HCT116 (cell line): ENCODE measurements at regions of chr15 and their contacts with region 1.

Region 1: DNA sequence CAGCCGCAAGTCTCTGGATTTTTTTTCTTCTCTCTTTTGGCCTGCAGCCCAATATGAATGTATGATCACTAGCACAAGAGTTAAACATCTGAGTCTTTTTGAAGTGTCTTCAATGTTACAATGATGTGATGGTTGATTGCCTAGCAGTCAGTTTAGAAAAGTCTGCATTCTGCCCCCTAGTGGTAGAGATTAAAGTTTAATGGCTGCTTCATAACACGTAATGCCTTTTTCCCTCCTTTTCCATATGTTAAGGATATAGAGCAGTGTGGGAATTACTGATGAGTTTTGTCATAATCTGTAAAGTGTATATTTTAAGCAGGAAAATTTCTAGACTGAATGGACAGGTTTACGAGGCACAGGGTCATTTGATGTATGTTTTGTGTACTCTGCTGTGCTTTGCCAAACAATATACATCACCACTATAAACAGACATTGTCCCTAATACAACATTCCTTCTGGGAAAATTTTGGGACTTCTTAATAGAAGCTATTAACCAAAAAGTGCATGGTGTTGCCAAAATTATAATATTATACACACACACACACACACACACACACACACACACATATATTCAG is 1038.5 kb upstream of the NR2F2 start:
- DNase-seq: peak; percentile 48
- ATAC-seq: peak; percentile 85
- H3K4me3 ChIP-seq: no peak overlapping the region
- H3K27ac ChIP-seq: no peak overlapping the region
- H3K4me1 ChIP-seq: no peaks in the 10 kb centered on the region
- H3K27me3 ChIP-seq: no peaks in the 10 kb centered on the region
- CTCF ChIP-seq: peak; percentile 37 to 85 (median 47); a peak in 4 of 6 replicates
- POLR2A ChIP-seq: no peak
- RAD21 ChIP-seq: peak; percentile 49; the same call in 1 of the 2 replicates

Region 2: DNA sequence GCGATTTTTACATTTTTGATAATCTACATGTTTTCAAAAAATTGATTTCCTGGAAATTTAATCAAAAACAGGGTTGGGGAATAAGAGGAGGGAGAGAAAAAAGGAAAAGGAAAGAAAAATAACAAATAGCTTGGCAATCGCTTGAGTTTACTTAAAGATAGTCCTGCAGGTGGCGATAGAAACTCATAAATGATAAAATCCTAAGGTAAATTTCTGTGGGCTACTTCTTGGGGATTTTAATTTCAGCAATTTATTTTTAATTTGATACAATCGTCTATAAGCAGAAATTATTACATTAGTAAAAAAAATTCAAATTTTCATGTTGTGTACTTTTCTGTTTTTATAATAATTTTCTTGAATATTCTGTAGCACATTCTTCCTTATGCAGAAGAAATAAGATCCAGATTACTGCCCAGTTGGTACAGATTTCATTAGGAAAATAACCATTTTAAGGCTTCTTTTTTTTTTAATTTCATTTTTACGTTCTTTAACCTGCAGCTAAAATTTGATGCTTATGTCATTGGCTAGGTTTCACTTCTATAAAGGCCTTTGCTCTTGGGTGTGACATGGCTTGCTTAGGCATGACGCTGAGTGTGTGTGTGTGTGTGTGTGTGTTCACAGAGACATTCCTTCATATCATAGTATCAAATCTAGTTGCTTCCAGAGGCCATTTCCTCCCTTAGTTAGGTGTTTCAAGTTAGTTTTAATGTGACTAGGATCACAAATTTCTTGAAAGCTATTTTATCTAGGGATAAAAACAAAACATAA is 878.8 kb before region 1 on chr15:
- CTCF ChIA-PET with region 1: no interaction called
- POLR2A ChIA-PET with region 1: no interaction called
- RAD21 ChIA-PET with region 1: no interaction called
- intact Hi-C with region 1: loop called (anchors 5 kb)
- DNase-seq: peak; percentile 6
- ATAC-seq: no peak
- H3K4me3 ChIP-seq: no peak overlapping the region
- H3K27ac ChIP-seq: no peak overlapping the region
- H3K4me1 ChIP-seq: no peaks in the 10 kb centered on the region
- H3K27me3 ChIP-seq: no peaks in the 10 kb centered on the region
- CTCF ChIP-seq: peak; percentile 16 to 59 (median 42); a peak in 4 of 6 replicates
- POLR2A ChIP-seq: no peak
- RAD21 ChIP-seq: peak; percentile 44; the same call in 1 of the 2 replicates

Region 3: GRCh38 chr15:94582369-94582768 is 709.6 kb before region 1 on chr15:
- CTCF ChIA-PET with region 1: no interaction called
- POLR2A ChIA-PET with region 1: no interaction called
- RAD21 ChIA-PET with region 1: no interaction called
- intact Hi-C with region 1: loop called (anchors 10 kb)
- DNase-seq: peak; percentile 18
- ATAC-seq: peak; percentile 84
- H3K4me3 ChIP-seq: no peak overlapping the region
- H3K27ac ChIP-seq: no peak overlapping the region
- H3K4me1 ChIP-seq: no peaks in the 10 kb centered on the region
- H3K27me3 ChIP-seq: peaks cover 11% of the 10 kb centered on the region
- CTCF ChIP-seq: peak in 2 of 3 experiments; percentile 39 to 53; a peak in 3 of 6 replicates
- POLR2A ChIP-seq: no peak
- RAD21 ChIP-seq: peak; percentile 60

Region 4: GRCh38 chr15:94670438-94671034 is 621.4 kb before region 1 on chr15:
- CTCF ChIA-PET with region 1: no interaction called
- POLR2A ChIA-PET with region 1: no interaction called
- RAD21 ChIA-PET with region 1: interaction called in 1 of 2 experiments, 4 read pairs
- intact Hi-C with region 1: loop called (anchors 2 kb)
- DNase-seq: peak; percentile 15
- ATAC-seq: peak; percentile 75
- H3K4me3 ChIP-seq: no peak overlapping the region
- H3K27ac ChIP-seq: no peak overlapping the region
- H3K4me1 ChIP-seq: no peaks in the 10 kb centered on the region
- H3K27me3 ChIP-seq: peaks cover 7% of the 10 kb centered on the region; the same call in 1 of the 2 replicates
- CTCF ChIP-seq: peak; percentile 48 to 79 (median 56); a peak in 5 of 6 replicates
- POLR2A ChIP-seq: no peak
- RAD21 ChIP-seq: peak; percentile 75

Region 5: DNA sequence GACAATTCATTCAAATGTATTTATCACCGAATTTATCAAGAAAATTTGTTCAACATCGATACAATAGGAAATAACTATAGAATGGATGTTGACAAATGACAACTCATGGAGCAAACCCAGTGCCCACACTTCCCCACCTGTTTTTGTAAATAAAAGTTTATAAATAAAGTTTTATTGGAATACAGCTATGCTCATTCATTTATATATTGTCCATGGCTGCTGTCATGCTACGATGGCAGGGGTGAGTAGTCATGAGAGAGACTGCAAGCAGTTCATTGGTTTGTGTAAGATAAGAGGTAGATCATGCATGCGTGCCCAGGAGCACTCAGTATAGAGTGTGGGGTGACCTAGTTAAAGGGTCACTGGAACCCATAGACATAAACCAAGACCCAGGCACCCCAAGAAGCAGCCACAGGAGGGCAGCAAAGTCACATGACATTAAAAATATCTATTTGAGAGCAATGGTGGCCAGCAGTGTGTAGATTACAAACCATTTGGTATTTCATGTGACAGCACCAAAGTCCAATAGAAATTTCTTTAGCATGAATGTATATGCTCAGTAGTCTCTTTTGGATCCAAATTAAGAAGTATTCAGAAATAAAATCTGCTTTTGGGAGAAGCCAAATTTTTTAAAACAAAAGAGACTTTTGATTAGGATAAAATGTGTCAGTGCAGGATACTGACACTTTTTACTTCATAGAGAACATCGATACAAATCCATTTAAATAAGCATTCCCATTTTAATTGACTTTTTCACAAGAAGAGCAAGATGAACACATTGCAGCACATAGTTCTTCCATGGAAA is 265.9 kb before region 1 on chr15:
- CTCF ChIA-PET with region 1: no interaction called
- POLR2A ChIA-PET with region 1: no interaction called
- RAD21 ChIA-PET with region 1: no interaction called
- intact Hi-C with region 1: loop called (anchors 1 kb)
- DNase-seq: peak; percentile 13
- ATAC-seq: peak; percentile 78
- H3K4me3 ChIP-seq: no peak overlapping the region
- H3K27ac ChIP-seq: no peak overlapping the region
- H3K4me1 ChIP-seq: no peaks in the 10 kb centered on the region
- H3K27me3 ChIP-seq: no peaks in the 10 kb centered on the region
- CTCF ChIP-seq: peak; percentile 13 to 61 (median 55); a peak in 4 of 6 replicates
- POLR2A ChIP-seq: no peak
- RAD21 ChIP-seq: peak; percentile 62